HepG2 (cell line): ENCODE measurements at regions of chr17 and their contacts with region 1.

Region 1: GRCh38 chr17:78497115-78497540 is 80.1 kb downstream of the DNAH17 start:
- DNase-seq: peak; percentile 79
- ATAC-seq: peak; percentile 83
- H3K4me3 ChIP-seq: no peak overlapping the region
- H3K27ac ChIP-seq: no peak overlapping the region
- H3K4me1 ChIP-seq: peaks cover 36% of the 10 kb centered on the region
- H3K27me3 ChIP-seq: peaks cover 0 to 37% of the 10 kb centered on the region in 2 experiments
- CTCF ChIP-seq: peak; percentile 99
- EP300 ChIP-seq: no peak
- POLR2A ChIP-seq: no peak
- RAD21 ChIP-seq: peak; percentile 99

Region 2: GRCh38 chr17:78484300-78485246 is 12.6 kb before region 1 on chr17:
- CTCF ChIA-PET with region 1: no interaction called
- POLR2A ChIA-PET with region 1: no interaction called
- in situ Hi-C with region 1: no loop called
- intact Hi-C with region 1: no loop called
- DNase-seq: no peak
- ATAC-seq: no peak
- H3K4me3 ChIP-seq: no peak overlapping the region
- H3K27ac ChIP-seq: no peak overlapping the region
- H3K4me1 ChIP-seq: no peaks in the 10 kb centered on the region
- H3K27me3 ChIP-seq: peaks cover 0 to 29% of the 10 kb centered on the region in 2 experiments; a peak in 3 of 5 replicates
- CTCF ChIP-seq: no peak
- EP300 ChIP-seq: no peak
- POLR2A ChIP-seq: no peak
- RAD21 ChIP-seq: no peak

Region 3: DNA sequence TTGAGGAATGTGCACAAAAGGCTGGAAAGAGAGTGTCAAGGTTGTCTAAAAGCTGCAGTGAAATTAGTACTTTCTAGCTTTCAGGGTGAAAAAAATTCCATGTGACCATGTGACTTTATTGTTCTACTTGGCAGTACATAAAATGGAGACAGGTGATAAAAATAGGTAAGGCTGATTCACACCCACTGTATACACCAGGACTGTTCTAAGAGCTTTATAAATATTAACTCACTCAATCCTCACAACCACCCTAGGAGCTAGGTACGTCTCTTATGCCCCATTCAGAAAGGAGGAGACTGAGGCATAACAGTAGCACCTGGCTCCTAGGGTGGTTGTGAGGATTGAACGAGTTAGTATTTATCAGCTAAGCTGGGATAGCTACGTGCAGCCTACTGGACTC is 108.3 kb after region 1 on chr17:
- CTCF ChIA-PET with region 1: interaction called, 14 read pairs
- POLR2A ChIA-PET with region 1: interaction called, 7 read pairs
- in situ Hi-C with region 1: loop called (anchors 10 kb)
- intact Hi-C with region 1: loop called (anchors 1 kb)
- DNase-seq: no peak
- ATAC-seq: no peak
- H3K4me3 ChIP-seq: no peak overlapping the region
- H3K27ac ChIP-seq: no peak overlapping the region
- H3K4me1 ChIP-seq: peaks cover 39% of the 10 kb centered on the region
- H3K27me3 ChIP-seq: no peaks in the 10 kb centered on the region
- CTCF ChIP-seq: no peak
- EP300 ChIP-seq: no peak
- POLR2A ChIP-seq: no peak
- RAD21 ChIP-seq: no peak

Region 4: GRCh38 chr17:78708510-78708973 is 211.4 kb after region 1 on chr17:
- CTCF ChIA-PET with region 1: interaction called, 43 read pairs
- POLR2A ChIA-PET with region 1: no interaction called
- in situ Hi-C with region 1: loop called (anchors 5 kb)
- intact Hi-C with region 1: loop called (anchors 1 kb)
- DNase-seq: peak; percentile 85
- ATAC-seq: peak; percentile 99
- H3K4me3 ChIP-seq: no peak overlapping the region
- H3K27ac ChIP-seq: no peak overlapping the region
- H3K4me1 ChIP-seq: peaks cover 10% of the 10 kb centered on the region
- H3K27me3 ChIP-seq: no peaks in the 10 kb centered on the region
- CTCF ChIP-seq: peak; percentile 99
- EP300 ChIP-seq: peak; percentile 30 to 35; a peak in 1 of 4 replicates
- POLR2A ChIP-seq: no peak
- RAD21 ChIP-seq: peak; percentile 98

Region 5: DNA sequence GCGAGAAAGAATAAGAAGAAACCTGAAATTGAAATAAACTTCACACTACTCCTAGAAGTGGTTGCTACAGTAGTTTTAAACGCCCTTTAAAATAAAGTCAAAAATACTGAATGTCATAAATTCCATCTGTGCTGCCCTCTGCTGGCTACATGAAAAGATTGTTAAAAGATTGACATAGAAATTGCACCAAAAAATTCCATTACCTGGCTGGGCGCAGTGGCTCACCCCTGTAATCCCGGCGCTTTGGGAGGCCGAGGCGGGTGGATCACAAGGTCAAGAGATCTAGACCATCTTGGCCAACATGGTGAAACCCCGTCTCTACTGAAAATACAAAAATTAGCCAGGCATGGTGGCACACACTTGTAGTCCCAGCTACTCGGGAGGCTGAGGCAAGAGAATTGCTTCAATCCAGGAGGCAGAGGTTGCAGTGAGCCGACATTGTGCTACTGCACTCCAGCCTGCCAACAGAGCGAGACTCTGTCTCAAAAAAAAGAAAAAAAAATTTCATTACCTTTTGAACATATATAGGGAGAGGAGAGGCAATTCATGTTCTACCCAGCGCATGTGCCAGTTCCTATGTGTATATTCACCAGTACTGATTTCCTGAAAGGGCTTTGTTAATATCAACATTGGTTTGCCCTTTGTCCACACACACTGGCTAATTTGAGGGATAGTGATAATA is 248.4 kb after region 1 on chr17:
- CTCF ChIA-PET with region 1: interaction called, 15 read pairs
- POLR2A ChIA-PET with region 1: interaction called, 8 read pairs
- in situ Hi-C with region 1: no loop called
- intact Hi-C with region 1: loop called (anchors 2 kb)
- DNase-seq: peak; percentile 52
- ATAC-seq: no peak
- H3K4me3 ChIP-seq: no peak overlapping the region
- H3K27ac ChIP-seq: peak overlapping the region; percentile 93
- H3K4me1 ChIP-seq: peaks cover 65% of the 10 kb centered on the region
- H3K27me3 ChIP-seq: no peaks in the 10 kb centered on the region
- CTCF ChIP-seq: peak; percentile 66
- EP300 ChIP-seq: no peak
- POLR2A ChIP-seq: no peak
- RAD21 ChIP-seq: peak; percentile 34; the same call in 1 of the 2 replicates

Region 6: DNA sequence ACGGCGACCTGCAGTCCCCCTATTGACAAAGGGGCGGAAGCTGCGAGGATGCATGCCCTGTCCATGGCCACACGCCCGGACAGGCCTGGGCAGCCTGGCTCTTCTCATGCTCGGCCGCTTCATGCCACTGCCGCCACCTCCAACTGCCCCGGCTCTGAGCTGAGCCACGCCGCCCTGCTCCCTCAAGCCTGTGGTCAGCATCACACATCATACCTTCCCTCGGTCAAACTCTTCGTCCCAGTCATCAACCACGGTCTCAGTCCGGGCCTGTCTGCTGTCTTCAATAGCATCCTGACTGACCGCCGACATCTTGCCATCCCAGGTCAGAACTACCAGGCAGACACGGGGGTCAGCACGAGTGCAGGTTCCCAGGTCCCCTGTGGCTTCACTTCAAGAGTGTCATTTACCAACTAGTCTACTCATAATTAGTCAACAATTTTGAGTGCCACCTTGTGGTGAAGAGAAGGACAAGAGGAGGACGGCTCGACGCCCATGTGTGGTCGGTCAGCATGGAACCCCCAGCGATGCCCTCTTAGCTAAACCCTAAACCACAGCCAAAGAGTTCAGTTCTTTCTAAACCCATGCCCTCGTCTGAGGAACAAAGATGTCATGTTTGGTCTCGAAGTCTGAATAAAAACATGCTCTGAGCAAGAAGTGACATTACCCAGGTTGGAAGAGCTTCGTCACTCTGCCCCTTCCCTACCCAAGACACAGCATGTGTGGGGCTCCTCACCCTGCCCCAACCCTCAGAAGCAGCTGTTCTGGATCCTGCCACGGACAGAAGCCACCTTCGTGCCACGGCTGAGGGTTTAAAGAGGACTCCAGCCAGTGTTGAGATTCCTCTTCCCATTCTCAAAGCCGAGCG is 301.8 kb after region 1 on chr17:
- CTCF ChIA-PET with region 1: interaction called, 3 read pairs
- POLR2A ChIA-PET with region 1: no interaction called
- in situ Hi-C with region 1: no loop called
- intact Hi-C with region 1: loop called (anchors 10 kb)
- DNase-seq: peak; percentile 50
- ATAC-seq: peak; percentile 56
- H3K4me3 ChIP-seq: no peak overlapping the region
- H3K27ac ChIP-seq: no peak overlapping the region
- H3K4me1 ChIP-seq: no peaks in the 10 kb centered on the region
- H3K27me3 ChIP-seq: no peaks in the 10 kb centered on the region
- CTCF ChIP-seq: peak; percentile 79
- EP300 ChIP-seq: no peak
- POLR2A ChIP-seq: no peak
- RAD21 ChIP-seq: 0 out of 2 replicates have a peak, but pooled peaks have one; percentile 46